SK-N-SH (cell line): ENCODE measurements at regions of chr7 and their contacts with region 1.

Region 1: DNA sequence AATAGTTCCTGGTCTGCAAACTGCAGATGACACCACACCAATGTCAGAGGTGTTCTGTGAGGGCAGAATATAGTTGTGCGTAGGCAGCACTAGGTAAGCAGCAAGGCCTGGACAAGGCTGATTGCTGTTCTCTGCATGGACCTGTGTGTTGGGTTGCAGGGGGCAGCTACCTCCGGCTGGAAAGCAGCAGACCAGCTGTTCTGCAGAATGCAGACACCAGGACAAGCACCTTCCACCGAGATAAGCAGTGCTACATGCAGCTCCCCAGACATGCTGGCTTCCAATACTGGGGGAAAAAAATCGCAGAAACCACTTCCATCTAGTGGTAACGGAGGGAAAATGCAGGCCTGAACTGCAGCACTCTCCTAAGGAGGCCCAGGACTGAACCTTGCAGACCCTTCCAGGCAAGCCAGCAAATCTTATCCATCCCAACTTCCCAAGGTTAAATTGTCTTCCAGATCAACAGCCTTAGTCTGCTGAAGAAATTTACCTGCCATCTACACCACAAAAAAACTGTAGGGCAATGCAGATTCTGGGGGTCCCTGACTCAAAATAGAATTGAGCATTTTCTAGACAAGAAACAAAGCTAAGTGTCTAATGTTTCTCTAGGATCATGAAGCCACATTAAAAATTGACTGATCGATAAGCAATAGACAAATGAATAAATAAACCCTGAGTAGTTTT is 50.5 kb upstream of the COBL start:
- DNase-seq: peak; percentile 81
- H3K4me3 ChIP-seq: peak overlapping the region in 1 of 2 experiments; percentile 39; a peak in 1 of 4 replicates
- H3K27ac ChIP-seq: no peak overlapping the region
- H3K4me1 ChIP-seq: peaks cover 0 to 3% of the 10 kb centered on the region in 2 experiments; a peak in 1 of 4 replicates
- H3K27me3 ChIP-seq: no peaks in the 10 kb centered on the region
- CTCF ChIP-seq: peak; percentile 41
- EP300 ChIP-seq: no peak
- RAD21 ChIP-seq: peak; percentile 89

Region 2: GRCh38 chr7:50092579-50093491 is 1274.2 kb before region 1 on chr7 and contains the start of gene ZPBP:
- CTCF ChIA-PET with region 1: interaction called, 23 read pairs
- POLR2A ChIA-PET with region 1: no interaction called
- DNase-seq: peak; percentile 65
- H3K4me3 ChIP-seq: no peak within 1 kb of the TSS; a peak in 1 of 4 replicates
- H3K27ac ChIP-seq: no peak within 1 kb of the TSS
- H3K4me1 ChIP-seq: no peaks in the 10 kb centered on the region
- H3K27me3 ChIP-seq: no peaks in the 10 kb centered on the region
- CTCF ChIP-seq: peak; percentile 98
- EP300 ChIP-seq: no peak
- RAD21 ChIP-seq: peak; percentile 95
- polyA plus RNA-seq, gene ZPBP: not detected in 2 replicates

Region 3: DNA sequence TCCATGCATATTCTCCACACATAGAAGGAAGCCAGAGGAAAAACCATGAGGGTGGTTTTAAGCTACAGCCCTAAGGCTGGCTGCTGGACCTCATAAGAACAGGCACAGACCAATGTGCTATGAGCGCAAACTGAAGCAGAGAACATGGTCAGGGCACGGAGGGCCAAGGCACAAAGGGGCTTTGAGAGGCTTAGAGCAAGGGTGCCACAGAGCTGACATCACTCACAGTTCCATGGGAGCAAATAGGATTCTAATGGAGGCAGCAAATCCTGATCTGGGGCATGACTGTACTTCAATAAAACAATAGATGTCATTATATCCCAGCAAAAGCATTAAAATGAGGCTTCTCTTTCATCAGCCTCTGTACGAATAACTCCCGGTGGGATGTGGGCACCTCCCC is 212.9 kb before region 1 on chr7:
- CTCF ChIA-PET with region 1: interaction called, 379 read pairs
- POLR2A ChIA-PET with region 1: no interaction called
- DNase-seq: no peak
- H3K4me3 ChIP-seq: no peak overlapping the region
- H3K27ac ChIP-seq: no peak overlapping the region
- H3K4me1 ChIP-seq: no peaks in the 10 kb centered on the region
- H3K27me3 ChIP-seq: peaks cover 68% of the 10 kb centered on the region
- CTCF ChIP-seq: no peak
- EP300 ChIP-seq: no peak
- RAD21 ChIP-seq: no peak

Region 4: DNA sequence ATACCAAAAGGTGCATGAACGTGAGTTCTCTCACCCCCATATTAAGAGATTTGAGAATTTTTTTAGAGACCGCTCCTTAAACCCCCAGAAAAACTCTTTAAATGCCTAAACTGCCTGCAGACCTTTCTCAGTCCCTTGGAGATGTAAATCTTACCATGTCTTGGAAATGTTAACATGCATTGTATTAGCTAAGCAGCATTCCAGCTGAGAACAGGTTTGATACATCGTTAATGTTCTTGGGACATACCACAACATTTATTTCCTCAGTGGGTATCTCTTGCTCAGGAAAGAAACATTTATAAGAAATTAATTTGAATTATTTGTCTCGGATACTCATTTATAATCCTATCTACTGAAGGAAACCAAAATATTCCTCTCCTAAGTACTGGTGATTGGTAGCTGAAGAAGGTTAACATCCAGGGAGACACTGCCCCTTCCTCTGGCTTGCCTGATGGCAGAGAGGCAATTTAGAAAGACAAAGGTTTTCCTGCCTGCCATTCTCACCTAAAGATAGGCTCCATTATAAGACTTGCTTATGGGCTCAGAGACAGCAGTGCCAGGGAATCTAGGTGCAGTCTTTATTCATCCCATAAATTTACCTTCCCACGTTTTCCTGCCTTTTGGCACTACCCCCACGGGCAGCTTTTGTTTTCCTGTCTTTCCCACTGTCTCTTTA is 191.6 kb before region 1 on chr7:
- CTCF ChIA-PET with region 1: interaction called, 11 read pairs
- POLR2A ChIA-PET with region 1: no interaction called
- DNase-seq: no peak
- H3K4me3 ChIP-seq: no peak overlapping the region
- H3K27ac ChIP-seq: no peak overlapping the region
- H3K4me1 ChIP-seq: no peaks in the 10 kb centered on the region
- H3K27me3 ChIP-seq: peaks cover 12% of the 10 kb centered on the region
- CTCF ChIP-seq: no peak
- EP300 ChIP-seq: no peak
- RAD21 ChIP-seq: no peak

Region 5: GRCh38 chr7:51187941-51188340 is 179.1 kb before region 1 on chr7:
- CTCF ChIA-PET with region 1: interaction called, 10 read pairs
- POLR2A ChIA-PET with region 1: no interaction called
- DNase-seq: peak; percentile 34
- H3K4me3 ChIP-seq: no peak overlapping the region
- H3K27ac ChIP-seq: no peak overlapping the region
- H3K4me1 ChIP-seq: no peaks in the 10 kb centered on the region
- H3K27me3 ChIP-seq: no peaks in the 10 kb centered on the region
- CTCF ChIP-seq: no peak
- EP300 ChIP-seq: no peak
- RAD21 ChIP-seq: peak; percentile 34; the same call in 1 of the 2 replicates

Region 6: GRCh38 chr7:51224811-51225612 is 142.1 kb before region 1 on chr7:
- CTCF ChIA-PET with region 1: interaction called, 10 read pairs
- POLR2A ChIA-PET with region 1: no interaction called
- DNase-seq: no peak
- H3K4me3 ChIP-seq: no peak overlapping the region
- H3K27ac ChIP-seq: no peak overlapping the region
- H3K4me1 ChIP-seq: no peaks in the 10 kb centered on the region
- H3K27me3 ChIP-seq: no peaks in the 10 kb centered on the region
- CTCF ChIP-seq: no peak
- EP300 ChIP-seq: no peak
- RAD21 ChIP-seq: no peak

Region 7: GRCh38 chr7:51236470-51237132 is 130.5 kb before region 1 on chr7:
- CTCF ChIA-PET with region 1: no interaction called
- POLR2A ChIA-PET with region 1: no interaction called
- DNase-seq: no peak
- H3K4me3 ChIP-seq: no peak overlapping the region
- H3K27ac ChIP-seq: no peak overlapping the region
- H3K4me1 ChIP-seq: no peaks in the 10 kb centered on the region
- H3K27me3 ChIP-seq: no peaks in the 10 kb centered on the region
- CTCF ChIP-seq: no peak
- EP300 ChIP-seq: no peak
- RAD21 ChIP-seq: no peak

Region 8: DNA sequence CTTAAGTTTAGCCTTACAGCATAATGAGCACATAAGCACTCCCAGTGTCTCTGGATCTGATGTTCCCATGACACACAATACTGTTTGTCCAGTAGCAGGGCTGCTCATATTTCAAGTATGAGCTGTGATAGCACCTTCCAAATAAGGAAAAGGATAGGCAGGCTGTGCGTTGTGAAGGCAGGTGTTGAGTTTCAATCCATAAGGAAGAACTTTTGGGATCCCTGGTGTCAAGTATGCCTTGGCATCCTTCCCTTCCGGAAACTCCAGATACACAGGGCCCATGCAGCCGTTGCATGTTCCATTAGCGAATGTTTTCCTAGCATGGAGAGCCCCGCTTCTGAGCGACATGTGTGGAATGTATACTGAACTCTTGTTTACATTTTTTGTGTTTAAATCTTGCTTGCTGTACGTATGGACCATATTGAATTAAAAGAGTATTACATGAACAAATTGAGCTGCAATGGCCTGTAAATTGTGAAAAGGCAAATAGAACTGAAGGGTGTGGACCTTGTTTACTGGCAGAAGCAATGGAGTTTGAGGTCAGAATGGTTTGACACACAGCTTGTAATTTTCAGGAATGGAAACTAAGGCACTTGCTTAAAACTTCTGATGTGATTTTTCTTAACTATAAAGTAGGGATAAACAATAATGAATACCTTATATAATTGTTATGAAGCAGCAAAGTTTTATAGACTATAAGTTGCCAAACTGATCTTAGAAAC is 16.7 kb before region 1 on chr7:
- CTCF ChIA-PET with region 1: interaction called, 76 read pairs
- POLR2A ChIA-PET with region 1: no interaction called
- DNase-seq: no peak
- H3K4me3 ChIP-seq: no peak overlapping the region
- H3K27ac ChIP-seq: no peak overlapping the region
- H3K4me1 ChIP-seq: no peaks in the 10 kb centered on the region
- H3K27me3 ChIP-seq: no peaks in the 10 kb centered on the region
- CTCF ChIP-seq: no peak
- EP300 ChIP-seq: no peak
- RAD21 ChIP-seq: no peak